ENCODE measurements at regions of chr12 and their contacts with region 1.

Region 1: DNA sequence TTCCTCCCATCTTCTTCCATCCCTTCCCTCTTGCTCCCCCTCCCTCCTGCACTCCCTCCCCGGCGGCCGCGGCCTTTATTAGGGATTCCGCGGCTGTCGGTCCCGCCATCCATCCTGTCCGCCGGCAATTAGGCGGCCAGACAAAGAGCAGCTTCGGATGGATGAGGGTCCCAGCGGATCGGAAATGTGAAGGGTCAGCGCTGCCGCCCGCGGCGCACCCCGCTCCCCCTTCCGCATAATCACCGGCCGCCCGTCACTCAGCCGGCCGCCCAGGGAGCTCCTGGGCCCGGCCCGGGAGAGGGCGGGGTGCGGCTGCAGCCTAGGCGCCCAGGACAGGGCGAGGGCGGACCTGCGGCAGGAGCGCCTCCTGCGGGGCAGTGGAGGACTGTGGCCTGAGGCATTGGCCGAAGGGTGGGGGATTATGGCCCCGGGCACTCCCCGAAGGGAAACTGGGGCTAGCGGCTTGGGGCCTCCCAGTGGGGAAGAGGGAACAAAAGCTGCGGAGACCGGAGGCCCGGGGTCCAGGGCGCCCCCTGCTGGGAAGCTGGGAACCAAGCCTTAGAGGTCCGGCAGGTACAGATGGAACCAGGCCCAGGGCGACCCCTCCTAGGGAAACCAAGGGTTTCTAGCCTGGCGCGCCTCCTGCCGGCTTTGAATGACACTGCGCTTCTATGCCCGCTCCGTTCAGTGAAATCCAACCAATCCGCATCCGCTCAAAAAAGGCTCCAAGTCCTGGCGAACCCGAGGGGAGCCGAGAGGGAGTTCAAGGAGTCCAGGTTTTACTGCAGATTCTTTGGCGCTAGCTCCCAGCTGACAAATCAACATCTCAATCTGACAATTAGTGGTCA is 4.4 kb upstream of the DNAJC22 start:
- DNase-seq: peak; percentile 81
- ATAC-seq: peak; percentile 58 to 69

Region 2: GRCh38 chr12:49296034-49296835 is 46.1 kb before region 1 on chr12:
- intact Hi-C with region 1: loop called in 1 of 2 experiments (anchors 10 kb)
- DNase-seq: peak; percentile 44
- ATAC-seq: peak in 1 of 2 donors; percentile 55

Region 3: GRCh38 chr12:49730050-49730449 is 387.8 kb after region 1 on chr12:
- intact Hi-C with region 1: no loop called
- DNase-seq: no peak
- ATAC-seq: no peak